Right ventricle myocardium inferior (tissue), 1 donor: ENCODE measurements at regions of chr6 and their contacts with region 1.

Region 1: GRCh38 chr6:13012977-13013680 is 296.6 kb downstream of the PHACTR1 start:
- DNase-seq: peak; percentile 75
- ATAC-seq: peak; percentile 41

Region 2: GRCh38 chr6:12962987-12963386 is 50.1 kb before region 1 on chr6:
- intact Hi-C with region 1: loop called (anchors 2 kb)
- DNase-seq: no peak
- ATAC-seq: peak; percentile 29

Region 3: DNA sequence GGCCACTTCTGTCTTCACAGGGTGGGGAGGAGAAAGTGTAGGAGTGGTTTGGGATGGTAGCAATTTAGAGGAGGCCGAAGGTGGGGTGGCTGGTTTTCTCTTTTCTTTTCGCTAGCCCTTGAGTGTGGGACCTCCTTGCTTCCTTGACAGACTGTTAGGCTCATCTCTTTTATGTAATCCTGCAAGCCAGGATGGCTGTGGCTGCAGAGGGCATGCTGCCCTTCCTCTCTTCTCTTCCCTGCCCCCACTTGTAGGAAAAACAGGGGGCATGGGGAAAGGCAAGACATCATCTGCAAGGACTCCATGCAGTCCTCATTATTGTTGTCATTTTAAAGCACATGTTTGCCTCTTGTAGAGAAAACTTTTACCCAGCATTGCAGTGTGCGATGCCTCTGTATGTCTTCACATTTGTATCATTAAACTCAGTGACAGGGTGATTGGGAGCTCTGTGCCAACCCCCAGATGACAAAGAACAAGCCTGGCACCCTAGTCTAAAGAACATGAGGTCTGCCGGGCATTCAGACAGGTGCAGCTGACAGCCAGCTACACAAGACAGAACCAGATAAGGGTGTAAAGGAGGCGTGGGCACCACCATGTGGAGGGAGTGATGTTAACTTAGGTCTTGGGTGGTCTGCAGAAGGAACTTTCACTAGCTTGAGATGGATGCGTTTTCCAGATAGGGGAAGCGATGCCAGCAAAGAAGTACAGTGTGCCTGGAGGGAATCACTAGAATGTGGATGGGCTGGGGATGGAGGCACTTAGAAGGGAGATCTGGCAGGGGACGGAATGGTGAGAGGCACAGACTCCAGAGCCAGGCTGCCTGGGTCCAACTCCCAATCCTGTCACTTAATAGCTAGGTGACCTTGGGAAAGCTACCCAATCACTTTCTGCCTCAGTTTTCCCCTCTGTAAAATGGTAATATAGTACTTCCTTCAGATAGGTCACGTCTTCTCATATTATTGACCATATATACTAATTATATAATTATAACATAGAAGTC is 107.7 kb after region 1 on chr6:
- intact Hi-C with region 1: loop called (anchors 5 kb)
- DNase-seq: no peak
- ATAC-seq: peak; percentile 94

Region 4: GRCh38 chr6:13302751-13303667 is 289.9 kb after region 1 on chr6:
- intact Hi-C with region 1: loop called (anchors 10 kb)
- DNase-seq: peak; percentile 80
- ATAC-seq: peak; percentile 73